Gastrocnemius medialis (tissue), 4 donors: ENCODE measurements at regions of chr1 and their contacts with region 1.

Region 1: GRCh38 chr1:206635080-206635977 is at the start of gene DYRK3:
- DNase-seq: peak; percentile 84 to 88
- ATAC-seq: peak; percentile 81 to 83
- H3K4me3 ChIP-seq: peak within 1 kb of the TSS; percentile 76 to 93 (median 88)
- H3K27ac ChIP-seq: peak within 1 kb of the TSS; percentile 70 to 79 (median 73)
- H3K4me1 ChIP-seq: peaks cover 11 to 16% of the 10 kb centered on the region in 2 donors
- H3K27me3 ChIP-seq: no peaks in the 10 kb centered on the region
- CTCF ChIP-seq: peak in 3 of 5 experiments; percentile 26 to 46 (median 29)
- POLR2A ChIP-seq: peak; percentile 89 to 95
- total RNA-seq, gene DYRK3: 0.85 to 1.8 (median 1.0) TPM

Region 2: DNA sequence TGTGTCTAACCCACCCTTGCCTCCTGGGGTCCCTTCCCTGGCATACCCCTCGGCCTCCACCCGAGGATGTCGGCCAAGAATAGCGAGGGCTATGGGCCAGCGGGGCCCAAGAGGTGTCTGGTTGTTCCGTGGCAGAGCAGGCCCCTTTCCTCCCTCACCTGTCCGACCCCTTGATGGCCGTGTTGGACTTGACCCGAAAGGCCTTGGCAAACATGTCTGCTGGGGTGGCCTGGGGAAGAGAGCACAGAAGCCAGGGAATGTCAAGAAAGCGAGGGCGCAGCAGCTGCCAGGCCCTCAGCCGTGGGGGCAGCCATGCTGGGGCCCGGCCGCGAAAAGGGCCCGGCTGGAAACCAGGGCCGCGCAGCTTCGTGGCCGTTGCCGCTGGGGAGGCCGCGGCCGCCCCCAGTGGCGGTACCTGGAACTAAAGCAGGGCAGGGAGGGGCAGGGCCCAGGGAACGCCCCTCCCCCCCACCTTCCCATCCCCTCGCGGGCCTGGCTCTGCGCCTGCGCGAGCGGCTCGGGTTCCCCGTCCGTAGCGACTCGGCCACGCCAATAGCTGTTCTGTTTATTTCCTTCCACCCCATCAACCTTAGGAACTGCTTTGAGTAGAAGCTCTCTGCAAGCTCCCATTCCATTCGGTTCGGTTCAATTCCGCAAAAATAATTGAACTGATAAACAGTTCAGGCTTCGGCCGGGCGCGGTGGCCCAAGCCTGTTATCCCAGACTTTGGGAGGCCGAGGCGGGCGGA is 23.0 kb before region 1 on chr1 and contains the start of gene EIF2D:
- in situ Hi-C with region 1: no loop called
- intact Hi-C with region 1: loop called (anchors 1 kb)
- DNase-seq: peak; percentile 87 to 93
- ATAC-seq: peak; percentile 97 to 99
- H3K4me3 ChIP-seq: peak within 1 kb of the TSS; percentile 77 to 87 (median 80)
- H3K27ac ChIP-seq: peak within 1 kb of the TSS; percentile 90 to 92 (median 90)
- H3K4me1 ChIP-seq: peaks cover 6 to 7% of the 10 kb centered on the region in 2 donors
- H3K27me3 ChIP-seq: no peaks in the 10 kb centered on the region
- CTCF ChIP-seq: peak; percentile 96 to 100 (median 99)
- POLR2A ChIP-seq: peak; percentile 56 to 66
- total RNA-seq, gene EIF2D: 23.7 to 61.2 (median 38.6) TPM

Region 3: GRCh38 chr1:206684478-206685333 is 49.4 kb after region 1 on chr1 and contains the start of gene MAPKAPK2:
- in situ Hi-C with region 1: no loop called
- intact Hi-C with region 1: loop called (anchors 1 kb)
- DNase-seq: peak; percentile 73 to 76
- ATAC-seq: peak; percentile 65 to 72
- H3K4me3 ChIP-seq: peak within 1 kb of the TSS; percentile 66 to 79 (median 75)
- H3K27ac ChIP-seq: peak within 1 kb of the TSS; percentile 93 to 98 (median 96)
- H3K4me1 ChIP-seq: peaks cover 39 to 43% of the 10 kb centered on the region in 2 donors
- H3K27me3 ChIP-seq: no peaks in the 10 kb centered on the region
- CTCF ChIP-seq: no peak
- POLR2A ChIP-seq: peak; percentile 82 to 83
- total RNA-seq, gene MAPKAPK2: 115 to 207 (median 140) TPM

Region 4: GRCh38 chr1:206808615-206809014 is 173.3 kb after region 1 on chr1:
- in situ Hi-C with region 1: loop called in 3 of 4 experiments (anchors 10 kb)
- intact Hi-C with region 1: loop called (anchors 1 kb)
- DNase-seq: peak in 1 of 2 donors; percentile 17
- ATAC-seq: peak; percentile 63 to 75
- H3K4me3 ChIP-seq: no peak overlapping the region
- H3K27ac ChIP-seq: no peak overlapping the region
- H3K4me1 ChIP-seq: no peaks in the 10 kb centered on the region
- H3K27me3 ChIP-seq: no peaks in the 10 kb centered on the region
- CTCF ChIP-seq: peak in 4 of 5 experiments; percentile 34 to 54 (median 45)
- POLR2A ChIP-seq: no peak

Region 5: GRCh38 chr1:206903662-206904061 is 268.3 kb after region 1 on chr1:
- in situ Hi-C with region 1: no loop called
- intact Hi-C with region 1: no loop called
- DNase-seq: peak in 1 of 2 donors; percentile 37
- ATAC-seq: peak; percentile 83 to 85
- H3K4me3 ChIP-seq: no peak overlapping the region
- H3K27ac ChIP-seq: peak overlapping the region in 3 of 4 donors; percentile 44 to 73 (median 59)
- H3K4me1 ChIP-seq: peaks cover 18 to 19% of the 10 kb centered on the region in 2 donors
- H3K27me3 ChIP-seq: no peaks in the 10 kb centered on the region
- CTCF ChIP-seq: no peak
- POLR2A ChIP-seq: no peak

Region 6: GRCh38 chr1:207052911-207053769 is 417.8 kb after region 1 on chr1 and contains the start of gene PFKFB2:
- in situ Hi-C with region 1: loop called in 1 of 4 experiments (anchors 25 kb)
- intact Hi-C with region 1: no loop called
- DNase-seq: peak; percentile 97 to 98
- ATAC-seq: peak; percentile 70 to 73
- H3K4me3 ChIP-seq: peak within 1 kb of the TSS; percentile 74 to 82 (median 76)
- H3K27ac ChIP-seq: peak within 1 kb of the TSS; percentile 93 to 95 (median 94)
- H3K4me1 ChIP-seq: peaks cover 29 to 50% of the 10 kb centered on the region in 2 donors
- H3K27me3 ChIP-seq: no peaks in the 10 kb centered on the region
- CTCF ChIP-seq: peak; percentile 42 to 58 (median 52)
- POLR2A ChIP-seq: peak; percentile 98
- total RNA-seq, gene PFKFB2: 35.5 to 40.3 (median 37.6) TPM